ENCODE measurements at regions of chr14 and their contacts with region 1.

Region 1: GRCh38 chr14:30558675-30559555 is at the start of gene G2E3:
- DNase-seq: peak; percentile 97
- ATAC-seq: peak; percentile 99
- H3K4me3 ChIP-seq: peak within 1 kb of the TSS; percentile 87 to 98 (median 98)
- H3K27ac ChIP-seq: peak within 1 kb of the TSS; percentile 80
- H3K4me1 ChIP-seq: peaks cover 34% of the 10 kb centered on the region
- H3K27me3 ChIP-seq: peaks cover 0 to 2% of the 10 kb centered on the region in 2 experiments; a peak in 1 of 5 replicates
- CTCF ChIP-seq: peak; percentile 34
- EP300 ChIP-seq: peak in 1 of 2 experiments; percentile 51; a peak in 1 of 4 replicates
- POLR2A ChIP-seq: peak; percentile 93 to 97
- RAD21 ChIP-seq: no peak; the same call in 1 of the 2 replicates
- total RNA-seq, gene G2E3: 63.0 and 90.7 TPM in 2 replicates

Region 2: DNA sequence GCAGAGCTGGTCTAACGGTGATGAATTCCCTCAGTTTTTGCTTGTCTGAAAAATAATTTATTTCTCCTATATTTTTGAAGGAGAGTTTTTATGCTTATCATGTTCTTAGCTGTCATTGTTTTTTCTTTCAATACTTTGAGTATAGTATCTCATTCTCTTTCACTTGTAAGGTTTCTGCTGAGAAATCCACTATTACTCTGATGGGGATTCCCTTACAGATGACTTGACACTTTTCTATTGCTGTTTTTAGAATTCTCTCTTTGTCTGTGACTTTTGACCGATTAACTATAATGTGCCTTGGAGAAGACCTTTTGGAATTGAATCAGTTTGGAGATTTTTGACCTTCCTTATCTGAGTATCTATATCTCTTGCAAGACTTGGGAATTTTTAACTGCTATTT is 770.8 kb before region 1 on chr14:
- CTCF ChIA-PET with region 1: no interaction called
- POLR2A ChIA-PET with region 1: no interaction called
- in situ Hi-C with region 1: no loop called
- intact Hi-C with region 1: no loop called
- DNase-seq: no peak
- ATAC-seq: no peak
- H3K4me3 ChIP-seq: no peak overlapping the region
- H3K27ac ChIP-seq: no peak overlapping the region
- H3K4me1 ChIP-seq: no peaks in the 10 kb centered on the region
- H3K27me3 ChIP-seq: no peaks in the 10 kb centered on the region
- CTCF ChIP-seq: no peak
- EP300 ChIP-seq: no peak
- POLR2A ChIP-seq: no peak
- RAD21 ChIP-seq: no peak

Region 3: DNA sequence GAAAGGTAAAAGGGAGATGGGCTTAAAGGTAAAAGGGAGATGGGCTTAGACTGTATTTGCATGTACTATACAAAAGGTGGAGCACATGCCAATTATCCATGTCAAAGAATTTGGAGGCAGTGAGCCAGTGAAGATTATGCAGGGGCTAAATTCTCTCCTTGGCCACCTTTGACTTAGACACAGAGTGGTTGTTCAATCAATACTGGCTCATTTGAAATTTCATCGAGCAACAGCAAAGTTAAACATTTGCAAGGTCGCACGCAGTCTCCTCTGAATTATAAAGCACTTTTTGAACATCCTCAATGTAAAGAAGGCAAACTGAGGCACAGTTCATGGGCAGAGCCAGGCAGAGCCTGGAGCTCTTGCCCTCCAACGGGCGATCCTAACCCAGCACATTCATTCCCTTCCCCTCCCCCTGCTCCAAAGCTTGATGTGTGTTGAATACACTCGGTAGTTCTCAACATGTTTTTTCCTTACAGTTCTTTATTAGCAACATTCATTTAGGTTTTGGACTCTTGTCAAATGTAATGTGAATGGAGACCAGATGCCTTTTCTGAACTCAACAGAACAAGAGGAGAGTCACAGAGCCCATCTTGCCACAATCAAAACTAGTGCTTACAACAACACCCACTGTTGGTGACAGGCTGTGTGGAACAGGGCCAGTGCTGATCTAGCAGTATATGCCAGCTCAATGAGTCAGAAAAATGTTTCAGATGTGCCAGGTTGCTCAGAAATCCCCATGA is 169.6 kb before region 1 on chr14:
- CTCF ChIA-PET with region 1: no interaction called
- POLR2A ChIA-PET with region 1: no interaction called
- in situ Hi-C with region 1: no loop called
- intact Hi-C with region 1: no loop called
- DNase-seq: no peak
- ATAC-seq: peak; percentile 51
- H3K4me3 ChIP-seq: no peak overlapping the region
- H3K27ac ChIP-seq: no peak overlapping the region
- H3K4me1 ChIP-seq: peaks cover 17% of the 10 kb centered on the region
- H3K27me3 ChIP-seq: no peaks in the 10 kb centered on the region
- CTCF ChIP-seq: 0 out of 2 replicates have a peak, but pooled peaks have one; percentile 13
- EP300 ChIP-seq: no peak
- POLR2A ChIP-seq: no peak
- RAD21 ChIP-seq: no peak

Region 4: GRCh38 chr14:30573226-30573814 is 14.4 kb after region 1 on chr14:
- CTCF ChIA-PET with region 1: no interaction called
- POLR2A ChIA-PET with region 1: no interaction called
- in situ Hi-C with region 1: no loop called
- intact Hi-C with region 1: loop called (anchors 1 kb)
- DNase-seq: no peak
- ATAC-seq: no peak
- H3K4me3 ChIP-seq: no peak overlapping the region
- H3K27ac ChIP-seq: no peak overlapping the region
- H3K4me1 ChIP-seq: peaks cover 40% of the 10 kb centered on the region
- H3K27me3 ChIP-seq: no peaks in the 10 kb centered on the region
- CTCF ChIP-seq: no peak
- EP300 ChIP-seq: no peak
- POLR2A ChIP-seq: no peak
- RAD21 ChIP-seq: no peak

Region 5: DNA sequence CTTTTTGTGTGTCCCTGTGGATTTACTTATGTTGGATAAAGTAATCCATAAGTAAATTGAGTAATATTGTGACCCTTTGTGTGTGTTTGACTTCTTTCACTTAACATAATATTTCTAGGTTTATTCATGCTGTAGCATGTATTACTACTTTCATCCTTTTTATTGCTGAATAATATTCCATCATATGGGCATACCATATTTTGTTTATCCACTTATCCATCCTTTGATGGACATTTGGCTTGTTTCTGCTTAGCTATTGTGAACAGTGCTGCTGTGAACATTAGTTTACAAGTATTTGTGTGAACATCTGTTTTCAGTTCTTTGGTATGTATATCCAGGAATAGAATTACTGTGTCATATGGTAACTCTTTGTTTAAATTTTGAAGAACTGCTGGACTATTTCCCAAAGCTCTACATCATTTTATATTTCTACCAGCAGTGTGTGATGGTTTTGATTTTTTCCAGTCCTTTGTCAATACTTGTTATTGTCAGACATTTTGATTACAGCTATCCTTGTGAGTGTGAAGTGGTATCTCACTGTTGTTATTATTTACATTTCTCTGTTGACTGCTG is 25.2 kb after region 1 on chr14:
- CTCF ChIA-PET with region 1: no interaction called
- POLR2A ChIA-PET with region 1: no interaction called
- in situ Hi-C with region 1: no loop called
- intact Hi-C with region 1: no loop called
- DNase-seq: no peak
- ATAC-seq: no peak
- H3K4me3 ChIP-seq: no peak overlapping the region
- H3K27ac ChIP-seq: no peak overlapping the region
- H3K4me1 ChIP-seq: no peaks in the 10 kb centered on the region
- H3K27me3 ChIP-seq: no peaks in the 10 kb centered on the region
- CTCF ChIP-seq: no peak
- EP300 ChIP-seq: no peak
- POLR2A ChIP-seq: no peak
- RAD21 ChIP-seq: no peak

Region 6: GRCh38 chr14:30600922-30601918 is 42.3 kb after region 1 on chr14:
- CTCF ChIA-PET with region 1: no interaction called
- POLR2A ChIA-PET with region 1: no interaction called
- in situ Hi-C with region 1: no loop called
- intact Hi-C with region 1: loop called (anchors 5 kb)
- DNase-seq: no peak
- ATAC-seq: peak; percentile 41
- H3K4me3 ChIP-seq: no peak overlapping the region
- H3K27ac ChIP-seq: no peak overlapping the region
- H3K4me1 ChIP-seq: no peaks in the 10 kb centered on the region
- H3K27me3 ChIP-seq: no peaks in the 10 kb centered on the region
- CTCF ChIP-seq: no peak
- EP300 ChIP-seq: no peak
- POLR2A ChIP-seq: no peak
- RAD21 ChIP-seq: no peak

Region 7: DNA sequence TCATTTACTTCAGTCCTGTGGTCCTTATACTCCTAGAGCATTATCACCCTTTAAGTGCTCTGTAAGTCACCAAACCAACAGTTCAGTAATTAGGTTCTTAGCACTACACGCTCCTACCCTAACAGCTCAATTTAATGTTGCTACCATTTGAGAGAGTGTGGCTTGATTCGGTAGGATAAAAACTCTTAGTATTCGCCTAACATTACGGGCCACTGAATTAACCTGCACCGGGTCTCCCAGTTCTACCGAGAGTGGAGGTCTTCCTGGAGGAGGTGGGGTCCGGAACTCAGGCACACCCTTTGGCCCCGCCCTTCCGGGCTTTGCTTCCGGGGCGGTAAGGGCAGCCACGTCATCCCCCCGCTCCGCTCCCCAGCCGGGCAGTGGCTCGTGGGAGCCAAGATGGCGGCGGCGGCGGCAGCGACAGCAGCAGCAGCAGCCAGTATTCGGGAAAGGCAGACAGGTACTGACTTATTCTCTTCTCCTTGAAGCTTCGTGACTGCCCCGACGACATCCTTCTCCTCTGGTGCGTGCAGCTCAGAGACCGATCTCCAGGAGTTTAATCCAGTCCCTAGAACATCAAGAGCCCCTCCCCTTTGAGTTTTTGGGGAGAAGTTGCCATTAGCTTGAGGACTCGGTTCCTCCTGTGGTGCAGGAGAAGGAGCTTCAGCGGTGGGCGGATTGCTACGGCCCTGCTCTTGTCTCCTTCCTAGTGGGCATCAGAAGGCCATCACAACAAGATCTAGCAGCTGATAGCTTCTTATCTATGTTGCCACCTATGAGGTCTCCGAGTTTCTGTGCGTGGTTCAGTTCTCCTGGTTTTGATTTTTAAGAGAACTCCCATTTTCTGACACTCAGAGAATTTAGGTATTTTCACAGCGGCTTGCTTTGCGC is 63.3 kb after region 1 on chr14 and contains the start of gene SCFD1:
- CTCF ChIA-PET with region 1: no interaction called
- POLR2A ChIA-PET with region 1: interaction called, 8 read pairs
- in situ Hi-C with region 1: no loop called
- intact Hi-C with region 1: loop called (anchors 1 kb)
- DNase-seq: peak; percentile 97
- ATAC-seq: peak; percentile 98
- H3K4me3 ChIP-seq: peak within 1 kb of the TSS; percentile 92 to 96 (median 94)
- H3K27ac ChIP-seq: peak within 1 kb of the TSS; percentile 87
- H3K4me1 ChIP-seq: peaks cover 43% of the 10 kb centered on the region
- H3K27me3 ChIP-seq: peaks cover 0 to 4% of the 10 kb centered on the region in 2 experiments; a peak in 2 of 5 replicates
- CTCF ChIP-seq: peak; percentile 13; the same call in 1 of the 2 replicates
- EP300 ChIP-seq: peak; percentile 45 to 79
- POLR2A ChIP-seq: peak; percentile 99
- RAD21 ChIP-seq: peak; percentile 85
- total RNA-seq, gene SCFD1: 256 and 318 TPM in 2 replicates

Region 8: DNA sequence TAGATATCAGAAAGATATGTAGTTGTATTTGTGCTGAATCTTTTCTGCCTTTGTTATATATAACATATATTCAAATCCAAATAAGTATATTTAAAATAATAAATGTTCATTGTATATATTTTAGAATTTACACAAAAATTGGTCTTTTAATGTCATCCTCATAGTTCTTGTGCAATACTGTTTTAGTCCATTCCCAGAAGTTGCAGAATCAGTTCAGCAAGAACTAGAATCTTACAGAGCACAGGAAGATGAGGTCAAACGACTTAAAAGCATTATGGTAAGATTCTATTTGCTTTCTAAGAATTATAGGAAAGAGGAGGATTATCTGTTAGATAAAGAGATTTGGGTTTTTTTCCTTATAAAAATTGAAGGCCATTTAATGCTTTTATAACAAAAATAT is 114.2 kb after region 1 on chr14:
- CTCF ChIA-PET with region 1: no interaction called
- POLR2A ChIA-PET with region 1: no interaction called
- in situ Hi-C with region 1: no loop called
- intact Hi-C with region 1: no loop called
- DNase-seq: no peak
- ATAC-seq: no peak
- H3K4me3 ChIP-seq: no peak overlapping the region
- H3K27ac ChIP-seq: no peak overlapping the region
- H3K4me1 ChIP-seq: no peaks in the 10 kb centered on the region
- H3K27me3 ChIP-seq: no peaks in the 10 kb centered on the region
- CTCF ChIP-seq: no peak
- EP300 ChIP-seq: no peak
- POLR2A ChIP-seq: no peak
- RAD21 ChIP-seq: no peak

Region 9: GRCh38 chr14:30874120-30874998 is 315.4 kb after region 1 on chr14 and contains the start of gene COCH:
- CTCF ChIA-PET with region 1: no interaction called
- POLR2A ChIA-PET with region 1: no interaction called
- in situ Hi-C with region 1: no loop called
- intact Hi-C with region 1: loop called (anchors 10 kb)
- DNase-seq: peak; percentile 71
- ATAC-seq: peak; percentile 92
- H3K4me3 ChIP-seq: peak within 1 kb of the TSS; percentile 71 to 89 (median 79)
- H3K27ac ChIP-seq: no peak within 1 kb of the TSS
- H3K4me1 ChIP-seq: peaks cover 29% of the 10 kb centered on the region
- H3K27me3 ChIP-seq: peaks cover 0 to 32% of the 10 kb centered on the region in 2 experiments; a peak in 4 of 5 replicates
- CTCF ChIP-seq: peak; percentile 72
- EP300 ChIP-seq: peak in 1 of 2 experiments; percentile 31; a peak in 1 of 4 replicates
- POLR2A ChIP-seq: peak in 1 of 2 experiments; percentile 86; a peak in 2 of 4 replicates
- RAD21 ChIP-seq: peak; percentile 95
- total RNA-seq, gene COCH: 46.1 and 79.3 TPM in 2 replicates

Measured in HepG2 (cell line).